Caco-2 (cell line): ENCODE measurements at regions of chr2 and their contacts with region 1.

Region 1: DNA sequence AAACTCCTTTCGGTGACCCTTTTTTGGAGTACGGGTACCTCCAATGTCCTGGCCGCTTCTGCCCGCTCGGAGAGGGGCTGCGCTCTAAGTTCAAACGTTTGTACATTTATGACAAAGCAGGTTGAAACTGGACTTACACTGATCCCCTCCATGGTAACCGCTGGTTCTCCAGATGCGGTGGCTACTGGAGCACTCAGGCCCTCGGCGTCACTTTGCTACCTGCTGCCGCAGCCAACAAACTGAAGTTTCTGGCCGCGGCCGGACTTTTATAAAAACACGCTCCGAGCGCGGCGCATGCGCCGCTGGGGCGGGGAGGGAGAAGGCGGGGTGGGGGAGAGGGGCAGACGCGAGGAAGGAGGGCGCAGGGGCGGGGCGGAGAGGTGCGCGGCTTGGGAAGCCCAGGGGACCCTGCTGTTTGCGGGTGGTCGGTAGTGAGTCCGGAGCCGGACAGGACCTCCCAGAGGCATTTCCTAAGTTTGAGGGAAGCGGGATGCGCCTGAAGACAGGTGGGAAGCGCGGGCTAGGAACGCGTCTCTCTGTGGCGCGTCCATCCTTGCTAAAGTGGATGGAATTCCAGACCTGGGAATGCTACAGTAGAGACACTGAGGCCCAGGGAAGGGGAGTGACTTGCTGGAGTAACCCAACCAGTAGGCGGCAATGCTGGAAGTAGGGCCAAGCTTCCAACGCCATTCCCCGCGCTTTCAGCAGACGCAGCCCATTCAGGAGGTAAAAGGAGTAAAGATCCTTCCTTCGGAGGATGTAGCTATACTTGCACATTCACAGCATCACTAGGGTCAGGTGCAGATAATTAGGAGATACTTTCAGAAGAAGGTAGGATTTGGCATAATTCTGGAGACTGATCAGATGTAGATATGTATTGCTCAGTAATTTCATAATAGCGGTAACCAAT is at the start of gene CXCR4:
- DNase-seq: peak; percentile 67
- H3K4me3 ChIP-seq: peak within 1 kb of the TSS; percentile 55
- H3K4me3 Mint-ChIP-seq: peak within 1 kb of the TSS; percentile 89
- H3K27ac Mint-ChIP-seq: no peak within 1 kb of the TSS
- H3K4me1 ChIP-seq: peaks cover 3% of the 10 kb centered on the region; the same call in 1 of the 2 replicates
- H3K4me1 Mint-ChIP-seq: no peaks in the 10 kb centered on the region
- H3K27me3 ChIP-seq: peaks cover 8% of the 10 kb centered on the region
- H3K27me3 Mint-ChIP-seq: peaks cover 32% of the 10 kb centered on the region
- CTCF ChIP-seq: peak in 1 of 2 experiments; percentile 22
- total RNA-seq, gene CXCR4: 1.00 and 1.4 TPM in 2 replicates

Region 2: DNA sequence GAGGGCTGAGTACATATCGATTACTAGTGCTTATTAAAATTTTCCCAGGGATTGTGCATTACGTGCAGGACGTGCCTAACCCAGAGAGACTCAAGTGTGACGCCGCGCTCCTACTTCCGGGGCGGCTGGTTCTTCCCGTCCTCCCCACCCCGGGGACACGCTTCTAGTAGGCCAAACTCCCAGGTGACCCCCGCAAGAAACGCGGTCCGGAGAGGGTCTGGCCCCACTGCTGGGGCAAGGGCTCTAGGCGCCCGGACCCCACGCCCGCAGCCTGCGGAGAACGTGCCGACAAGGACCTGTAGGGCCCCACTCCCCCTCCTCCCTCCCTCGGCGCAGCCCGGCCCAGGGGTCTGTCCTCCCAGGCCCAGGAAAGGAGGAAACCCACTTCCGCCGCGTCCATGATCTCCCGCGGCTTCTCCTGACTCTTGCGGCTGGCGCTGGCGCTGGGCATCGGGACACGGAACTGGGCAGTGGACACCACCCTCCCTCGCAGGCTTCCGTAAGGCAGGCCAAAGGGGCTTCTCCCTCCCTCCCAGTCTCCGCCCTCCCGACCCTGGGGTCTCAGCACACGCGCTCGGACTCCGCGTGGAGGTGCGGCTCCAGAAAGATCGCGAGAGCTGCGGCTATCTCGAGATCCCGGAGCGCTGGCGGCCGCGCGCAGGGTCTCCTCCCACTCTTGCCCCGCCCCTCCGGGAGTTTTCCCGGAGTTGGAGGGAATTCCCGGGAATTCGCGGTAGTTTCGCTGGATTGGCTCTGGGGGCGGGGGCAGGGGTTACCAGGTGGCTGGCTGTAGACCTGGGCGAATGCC is 132.9 kb before region 1 on chr2 and contains the start of gene DARS1:
- CTCF ChIA-PET with region 1: no interaction called
- POLR2A ChIA-PET with region 1: no interaction called
- intact Hi-C with region 1: loop called (anchors 5 kb)
- DNase-seq: peak; percentile 96
- H3K4me3 ChIP-seq: peak within 1 kb of the TSS; percentile 84
- H3K4me3 Mint-ChIP-seq: peak within 1 kb of the TSS; percentile 97
- H3K27ac Mint-ChIP-seq: peak within 1 kb of the TSS; percentile 97
- H3K4me1 ChIP-seq: 0 out of 2 replicates have a peak, but pooled peaks cover 6% of the 10 kb centered on the region
- H3K4me1 Mint-ChIP-seq: no peaks in the 10 kb centered on the region
- H3K27me3 ChIP-seq: no peaks in the 10 kb centered on the region
- H3K27me3 Mint-ChIP-seq: no peaks in the 10 kb centered on the region
- CTCF ChIP-seq: no peak
- total RNA-seq, gene DARS1: 90.9 and 94.9 TPM in 2 replicates

Region 3: GRCh38 chr2:135997380-135997779 is 120.8 kb before region 1 on chr2:
- CTCF ChIA-PET with region 1: no interaction called
- POLR2A ChIA-PET with region 1: no interaction called
- intact Hi-C with region 1: no loop called
- DNase-seq: peak; percentile 39 to 55
- H3K4me3 ChIP-seq: no peak overlapping the region
- H3K4me3 Mint-ChIP-seq: no peak overlapping the region
- H3K27ac Mint-ChIP-seq: no peak overlapping the region
- H3K4me1 ChIP-seq: no peaks in the 10 kb centered on the region
- H3K4me1 Mint-ChIP-seq: no peaks in the 10 kb centered on the region
- H3K27me3 ChIP-seq: no peaks in the 10 kb centered on the region
- H3K27me3 Mint-ChIP-seq: no peaks in the 10 kb centered on the region
- CTCF ChIP-seq: peak in 1 of 2 experiments; percentile 57